Right ventricle myocardium inferior (tissue), 1 donor: ENCODE measurements at regions of chr15 and their contacts with region 1.

Region 1: DNA sequence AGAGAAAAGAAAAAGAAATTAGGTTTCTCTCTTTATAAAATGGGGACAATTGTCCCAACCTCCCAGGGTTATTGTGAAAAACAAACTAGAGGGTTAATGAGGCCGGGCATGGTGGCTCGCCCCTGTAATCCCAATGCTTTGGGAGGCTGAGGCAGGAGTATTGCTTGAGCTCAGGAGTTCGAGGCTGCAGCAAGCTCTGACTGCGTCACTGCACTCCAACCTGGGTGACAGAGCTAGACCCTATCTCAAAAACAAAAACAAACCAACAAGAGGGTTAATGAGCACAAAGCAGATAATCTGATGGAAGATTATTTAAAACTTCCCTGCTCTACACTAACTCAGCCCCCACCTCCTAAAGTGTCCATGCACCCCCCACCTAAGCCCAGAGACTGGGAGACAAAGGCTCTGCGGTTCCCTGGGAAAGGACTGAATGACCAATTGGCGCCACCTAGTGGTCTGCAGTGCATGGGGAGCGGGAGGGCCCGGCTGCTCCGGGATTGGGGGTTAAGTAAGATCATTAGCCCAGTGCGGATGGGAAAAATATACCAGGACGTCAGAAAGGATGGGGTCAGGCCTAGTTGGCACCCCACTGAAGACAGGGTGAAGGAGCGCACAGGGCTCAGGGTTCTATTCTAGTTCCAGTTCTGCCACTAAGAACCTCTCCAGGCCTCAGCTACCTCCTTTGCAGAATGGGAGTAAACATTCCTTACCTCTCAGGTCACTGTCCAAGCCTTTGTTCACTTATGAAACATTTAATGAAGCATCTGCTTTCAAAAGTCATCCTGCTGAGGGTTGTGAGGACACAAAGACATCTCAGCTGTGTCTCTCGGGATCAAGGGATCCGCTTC is 15.6 kb downstream of the PIF1 start:
- DNase-seq: peak; percentile 88
- ATAC-seq: peak; percentile 87

Region 2: GRCh38 chr15:64731012-64731806 is 78.7 kb before region 1 on chr15:
- intact Hi-C with region 1: loop called (anchors 2 kb)
- DNase-seq: peak; percentile 85
- ATAC-seq: peak; percentile 74

Region 3: DNA sequence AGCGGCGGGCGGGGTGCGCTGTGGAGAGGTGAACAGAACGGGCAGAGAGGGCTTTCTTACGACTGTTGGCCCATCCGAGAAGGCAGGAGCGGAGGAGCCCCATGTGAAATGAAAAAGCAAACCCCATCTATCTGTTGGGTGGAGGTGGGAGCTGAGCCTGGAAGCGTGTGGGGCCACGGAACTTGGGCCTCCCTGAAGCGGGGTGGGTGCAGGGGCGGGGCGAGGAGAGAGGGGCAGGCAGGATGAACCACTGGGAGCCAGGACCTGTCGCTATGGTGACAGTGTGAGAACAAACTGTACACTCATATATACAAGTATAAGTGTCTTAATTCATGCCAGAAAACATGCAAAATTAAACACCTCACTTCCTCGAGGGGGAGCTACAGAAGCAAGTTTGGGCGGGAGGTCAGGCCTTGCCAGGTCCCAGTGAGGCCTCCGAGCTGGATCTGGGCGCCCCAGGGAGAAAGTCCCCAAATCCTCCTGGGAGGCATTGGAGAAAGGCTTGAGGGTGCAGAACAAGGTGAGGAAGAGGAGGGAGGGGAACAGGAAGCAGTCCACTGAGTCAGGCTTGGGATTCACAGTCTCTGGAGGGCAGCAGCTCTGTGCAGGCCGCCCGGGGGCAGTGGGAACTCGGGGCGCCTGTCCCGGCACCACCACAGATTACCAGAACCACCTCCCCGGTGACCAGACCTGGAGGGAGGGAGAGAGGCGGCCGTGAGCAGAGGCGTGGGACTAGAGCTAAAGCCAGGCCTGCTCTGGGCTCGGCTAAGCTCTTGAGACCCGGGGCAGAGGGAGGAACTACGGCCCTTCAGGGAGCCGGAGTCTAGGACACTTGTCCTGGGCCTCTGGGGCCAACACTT is 69.3 kb before region 1 on chr15:
- intact Hi-C with region 1: loop called (anchors 2 kb)
- DNase-seq: peak; percentile 84
- ATAC-seq: peak; percentile 94

Region 4: DNA sequence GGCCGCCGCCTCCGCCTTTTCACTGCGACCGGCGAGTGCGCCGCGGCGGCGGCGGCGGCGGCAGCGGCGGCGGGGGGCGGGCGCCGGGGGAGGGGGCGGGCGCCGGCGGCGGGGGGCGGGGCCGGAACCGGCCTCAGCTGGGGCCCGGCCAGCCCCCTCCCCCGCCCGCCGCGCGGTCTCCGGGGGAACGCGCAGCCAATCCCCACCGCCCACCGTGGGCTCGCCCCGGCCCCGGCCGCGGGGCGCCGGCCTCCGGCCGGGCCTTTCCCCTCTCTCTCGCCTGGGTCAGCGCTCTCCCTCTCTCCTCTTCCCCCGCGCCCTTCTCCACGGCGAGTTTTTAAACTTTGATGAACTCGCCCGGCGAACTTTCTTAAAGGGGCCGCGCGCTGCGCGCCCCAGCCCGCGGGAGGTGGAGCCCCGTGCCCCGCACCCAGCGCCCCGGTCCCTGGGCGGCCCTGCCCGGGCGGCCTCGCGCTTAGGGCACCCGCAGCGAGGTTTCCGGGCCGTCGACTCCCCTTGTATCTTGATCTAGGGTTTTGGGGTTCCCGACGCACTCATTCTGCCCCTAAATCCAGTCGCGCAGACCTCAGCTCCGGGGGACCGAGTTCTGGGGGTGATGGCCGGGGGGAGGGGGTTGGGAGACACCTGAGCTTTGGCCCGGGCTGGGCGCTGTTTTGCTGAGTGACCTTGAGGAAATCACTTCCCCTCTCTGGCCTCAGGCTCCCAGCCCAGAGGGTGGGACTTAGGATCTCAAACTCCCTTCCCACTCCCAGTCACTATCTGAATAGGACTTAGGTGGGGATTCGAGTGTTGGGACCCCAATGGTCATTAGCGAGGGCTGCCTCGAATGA is 34.1 kb before region 1 on chr15 and contains the start of gene RBPMS2:
- intact Hi-C with region 1: loop called (anchors 5 kb)
- DNase-seq: no peak
- ATAC-seq: peak; percentile 58
- total RNA-seq, gene RBPMS2: 255 TPM